ENCODE measurements at regions of chr3 and their contacts with region 1.

Region 1: GRCh38 chr3:38479431-38480092 is 16.6 kb upstream of the EXOG start:
- DNase-seq: peak in 13 of 14 experiments; percentile 17 to 76 (median 38)
- ATAC-seq: peak; percentile 64
- H3K4me3 ChIP-seq: no peak overlapping the region
- H3K4me3 Mint-ChIP-seq: no peak overlapping the region
- H3K27ac ChIP-seq: no peak overlapping the region
- H3K27ac Mint-ChIP-seq: no peak overlapping the region
- H3K4me1 ChIP-seq: peaks cover 3% of the 10 kb centered on the region
- H3K4me1 Mint-ChIP-seq: peaks cover 9% of the 10 kb centered on the region
- H3K27me3 ChIP-seq: no peaks in the 10 kb centered on the region
- H3K27me3 Mint-ChIP-seq: no peaks in the 10 kb centered on the region
- CTCF ChIP-seq: peak; percentile 94

Region 2: DNA sequence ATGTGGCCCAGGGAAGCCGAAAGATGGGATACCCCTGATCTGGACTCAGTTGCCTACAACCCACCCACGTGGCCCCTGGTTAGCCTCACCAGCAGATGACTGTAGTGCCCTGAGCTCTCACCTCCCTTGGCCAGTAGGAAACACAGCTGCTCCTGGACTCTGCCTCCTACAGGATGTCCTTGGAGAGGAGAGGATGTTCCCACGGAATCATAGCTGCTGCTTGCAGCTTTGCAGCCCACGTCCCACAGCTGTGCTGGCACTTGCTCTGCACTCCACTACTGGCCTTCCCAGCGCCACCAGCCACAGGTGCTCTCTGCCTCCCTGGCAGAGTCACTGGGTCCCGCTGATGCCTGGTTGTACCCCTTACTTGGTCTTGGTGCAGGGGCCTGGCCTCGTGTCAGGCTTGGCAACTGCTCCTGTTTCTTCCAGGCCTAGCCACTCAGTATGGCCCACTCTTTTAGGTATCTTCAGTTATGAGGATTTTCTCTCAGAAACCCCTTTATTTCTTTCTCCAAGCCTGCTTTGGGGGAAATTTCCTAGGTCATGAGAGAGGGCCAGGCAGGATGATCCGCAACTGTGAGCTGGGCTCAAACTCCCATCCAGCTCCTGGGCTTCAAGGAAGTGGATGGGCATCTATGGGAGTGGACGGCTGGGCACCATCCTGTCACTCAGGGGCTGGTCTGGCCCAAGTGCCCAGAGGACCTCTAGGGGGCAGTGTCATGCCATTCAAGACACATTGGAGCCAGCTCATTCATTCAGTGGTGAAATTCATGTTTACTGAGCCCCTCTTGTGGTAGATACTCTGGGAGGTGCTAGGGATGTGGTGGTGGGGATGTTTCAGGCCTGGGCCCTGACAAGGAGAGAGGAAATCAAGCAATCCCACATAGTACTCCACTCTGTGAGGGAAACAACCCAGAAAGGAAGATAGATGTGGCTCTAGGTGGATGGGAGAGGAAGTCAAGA is 505.2 kb before region 1 on chr3:
- CTCF ChIA-PET with region 1: no interaction called
- POLR2A ChIA-PET with region 1: no interaction called
- intact Hi-C with region 1: loop called (anchors 1 to 5 kb)
- DNase-seq: peak; percentile 49 to 85 (median 62)
- ATAC-seq: peak; percentile 97
- H3K4me3 ChIP-seq: no peak overlapping the region
- H3K4me3 Mint-ChIP-seq: no peak overlapping the region
- H3K27ac ChIP-seq: no peak overlapping the region
- H3K27ac Mint-ChIP-seq: no peak overlapping the region
- H3K4me1 ChIP-seq: peaks cover 5% of the 10 kb centered on the region
- H3K4me1 Mint-ChIP-seq: peaks cover 4% of the 10 kb centered on the region
- H3K27me3 ChIP-seq: no peaks in the 10 kb centered on the region
- H3K27me3 Mint-ChIP-seq: no peaks in the 10 kb centered on the region
- CTCF ChIP-seq: peak; percentile 85

Region 3: GRCh38 chr3:38805765-38806386 is 326.3 kb after region 1 on chr3:
- CTCF ChIA-PET with region 1: no interaction called
- POLR2A ChIA-PET with region 1: no interaction called
- intact Hi-C with region 1: no loop called
- DNase-seq: peak in 5 of 14 experiments; percentile 3 to 46 (median 18)
- ATAC-seq: no peak
- H3K4me3 ChIP-seq: no peak overlapping the region
- H3K4me3 Mint-ChIP-seq: no peak overlapping the region
- H3K27ac ChIP-seq: no peak overlapping the region
- H3K27ac Mint-ChIP-seq: no peak overlapping the region
- H3K4me1 ChIP-seq: no peaks in the 10 kb centered on the region
- H3K4me1 Mint-ChIP-seq: no peaks in the 10 kb centered on the region
- H3K27me3 ChIP-seq: no peaks in the 10 kb centered on the region
- H3K27me3 Mint-ChIP-seq: peaks cover 4% of the 10 kb centered on the region
- CTCF ChIP-seq: no peak

Region 4: GRCh38 chr3:39460677-39461076 is 981.1 kb after region 1 on chr3:
- CTCF ChIA-PET with region 1: no interaction called
- POLR2A ChIA-PET with region 1: no interaction called
- intact Hi-C with region 1: no loop called
- DNase-seq: no peak
- ATAC-seq: no peak
- H3K4me3 ChIP-seq: no peak overlapping the region
- H3K4me3 Mint-ChIP-seq: no peak overlapping the region
- H3K27ac ChIP-seq: no peak overlapping the region
- H3K27ac Mint-ChIP-seq: no peak overlapping the region
- H3K4me1 ChIP-seq: no peaks in the 10 kb centered on the region
- H3K4me1 Mint-ChIP-seq: no peaks in the 10 kb centered on the region
- H3K27me3 ChIP-seq: no peaks in the 10 kb centered on the region
- H3K27me3 Mint-ChIP-seq: peaks cover 40% of the 10 kb centered on the region
- CTCF ChIP-seq: no peak

Measured in CD4-positive, alpha-beta T cell (primary cell).